ENCODE measurements at regions of chr1 and their contacts with region 1.

Region 1: GRCh38 chr1:185559684-185560331 is 174.4 kb upstream of the HMCN1 start:
- DNase-seq: peak; percentile 81
- ATAC-seq: peak; percentile 94
- H3K4me3 Mint-ChIP-seq: no peak overlapping the region
- H3K27ac Mint-ChIP-seq: peak overlapping the region; percentile 83
- H3K4me1 Mint-ChIP-seq: peaks cover 36% of the 10 kb centered on the region
- H3K27me3 Mint-ChIP-seq: no peaks in the 10 kb centered on the region
- CTCF ChIP-seq: peak; percentile 39

Region 2: DNA sequence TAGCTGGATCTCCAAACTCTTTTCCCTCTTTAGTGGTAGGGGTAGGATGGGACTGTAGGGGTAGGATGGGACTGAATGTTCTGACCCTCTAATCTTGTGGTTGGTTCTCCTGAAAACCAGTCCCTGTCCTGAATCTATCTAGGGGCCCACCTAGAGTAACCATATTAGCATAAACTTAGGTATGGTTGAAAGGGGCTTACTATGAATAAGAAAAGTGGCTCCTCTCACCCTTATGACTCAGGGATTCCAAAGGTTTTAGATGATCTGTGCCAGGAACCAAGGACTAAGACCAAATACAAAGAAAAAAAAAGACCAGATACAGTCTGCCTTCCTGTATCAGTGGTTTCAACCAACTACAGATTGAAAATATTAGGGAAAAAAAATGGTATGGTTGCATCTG is 485.5 kb before region 1 on chr1:
- CTCF ChIA-PET with region 1: no interaction called
- POLR2A ChIA-PET with region 1: no interaction called
- intact Hi-C with region 1: no loop called
- DNase-seq: no peak
- ATAC-seq: peak; percentile 58
- H3K4me3 Mint-ChIP-seq: no peak overlapping the region
- H3K27ac Mint-ChIP-seq: no peak overlapping the region
- H3K4me1 Mint-ChIP-seq: peaks cover 50% of the 10 kb centered on the region
- H3K27me3 Mint-ChIP-seq: no peaks in the 10 kb centered on the region
- CTCF ChIP-seq: no peak

Region 3: DNA sequence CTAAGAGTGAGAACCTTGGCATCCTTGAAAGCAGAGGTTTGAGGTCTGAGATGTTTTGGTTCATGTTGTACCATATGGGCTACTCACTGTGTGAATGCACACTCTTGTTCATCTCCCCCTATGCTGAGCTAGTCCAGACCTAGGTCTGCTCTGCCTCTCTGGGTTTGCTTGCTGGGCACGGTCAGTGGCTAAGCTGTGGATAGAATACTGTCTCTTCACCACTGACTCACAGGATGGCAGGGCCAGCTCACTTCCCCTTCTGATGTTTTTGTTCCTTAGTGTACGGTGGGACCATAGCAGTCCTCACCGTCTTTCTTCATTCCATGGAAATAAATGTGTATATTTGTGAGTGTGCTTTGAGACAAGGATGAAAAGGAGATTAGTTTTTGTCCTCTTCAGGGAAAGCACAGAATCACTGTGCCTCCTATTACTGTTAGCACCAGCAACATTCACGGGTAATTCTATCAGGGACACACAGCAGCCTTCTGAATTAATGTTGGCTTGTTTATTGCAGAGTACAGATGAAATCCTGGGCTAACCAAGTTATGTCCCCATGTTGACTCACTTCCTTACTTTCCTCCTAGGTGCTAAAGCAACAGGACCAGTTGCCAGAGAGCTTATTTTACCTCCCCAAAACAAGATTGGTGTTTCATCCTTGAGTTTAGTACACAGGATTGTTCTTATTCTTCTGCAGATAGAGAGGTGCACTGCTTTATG is 185.8 kb before region 1 on chr1:
- CTCF ChIA-PET with region 1: no interaction called
- POLR2A ChIA-PET with region 1: no interaction called
- intact Hi-C with region 1: no loop called
- DNase-seq: no peak
- ATAC-seq: peak; percentile 62
- H3K4me3 Mint-ChIP-seq: no peak overlapping the region
- H3K27ac Mint-ChIP-seq: peak overlapping the region; percentile 36
- H3K4me1 Mint-ChIP-seq: peaks cover 17% of the 10 kb centered on the region
- H3K27me3 Mint-ChIP-seq: no peaks in the 10 kb centered on the region
- CTCF ChIP-seq: no peak

Region 4: DNA sequence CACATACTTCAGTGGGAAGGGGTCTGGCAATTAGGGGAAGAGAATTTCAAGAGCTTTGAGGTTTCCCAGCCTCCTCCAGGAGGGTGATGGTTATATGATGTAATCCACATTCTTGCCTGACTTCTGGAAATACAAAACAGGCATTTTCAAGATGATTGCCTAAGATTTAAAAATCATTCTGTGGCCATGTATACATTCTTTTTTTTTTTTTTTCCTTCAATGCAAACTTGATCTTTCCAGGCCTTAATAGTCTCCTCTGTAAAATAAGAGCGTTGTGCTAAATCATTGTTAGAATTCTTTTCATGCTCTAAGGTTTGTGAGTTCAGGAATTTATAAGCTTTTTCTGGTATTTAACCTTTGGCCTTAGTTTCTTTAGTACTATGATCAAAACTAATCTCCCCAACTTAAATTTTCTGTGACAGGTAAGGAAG is 17.9 kb before region 1 on chr1:
- CTCF ChIA-PET with region 1: interaction called, 10 read pairs
- POLR2A ChIA-PET with region 1: no interaction called
- intact Hi-C with region 1: no loop called
- DNase-seq: no peak
- ATAC-seq: no peak
- H3K4me3 Mint-ChIP-seq: no peak overlapping the region
- H3K27ac Mint-ChIP-seq: peak overlapping the region; percentile 36
- H3K4me1 Mint-ChIP-seq: peaks cover 6% of the 10 kb centered on the region
- H3K27me3 Mint-ChIP-seq: no peaks in the 10 kb centered on the region
- CTCF ChIP-seq: no peak

Region 5: GRCh38 chr1:185636848-185637247 is 77.0 kb after region 1 on chr1:
- CTCF ChIA-PET with region 1: interaction called, 3 read pairs
- POLR2A ChIA-PET with region 1: interaction called, 3 read pairs
- intact Hi-C with region 1: loop called (anchors 2 kb)
- DNase-seq: peak; percentile 71
- ATAC-seq: peak; percentile 98
- H3K4me3 Mint-ChIP-seq: no peak overlapping the region
- H3K27ac Mint-ChIP-seq: peak overlapping the region; percentile 83
- H3K4me1 Mint-ChIP-seq: peaks cover 13% of the 10 kb centered on the region
- H3K27me3 Mint-ChIP-seq: no peaks in the 10 kb centered on the region
- CTCF ChIP-seq: no peak

Measured in activated CD8-positive, alpha-beta T cell treated with anti-CD3 and anti-CD28 coated beads for 36 hours (primary cell).